PC-3 (cell line): ENCODE measurements at regions of chr4 and their contacts with region 1.

Region 1: GRCh38 chr4:137800861-137801260 is 268.6 kb upstream of the PCDH18 start:
- DNase-seq: no peak
- ATAC-seq: no peak
- H3K4me3 ChIP-seq: no peak overlapping the region
- H3K27ac ChIP-seq: no peak overlapping the region
- H3K4me1 ChIP-seq: peaks cover 22% of the 10 kb centered on the region
- H3K27me3 ChIP-seq: no peaks in the 10 kb centered on the region
- CTCF ChIP-seq: no peak

Region 2: DNA sequence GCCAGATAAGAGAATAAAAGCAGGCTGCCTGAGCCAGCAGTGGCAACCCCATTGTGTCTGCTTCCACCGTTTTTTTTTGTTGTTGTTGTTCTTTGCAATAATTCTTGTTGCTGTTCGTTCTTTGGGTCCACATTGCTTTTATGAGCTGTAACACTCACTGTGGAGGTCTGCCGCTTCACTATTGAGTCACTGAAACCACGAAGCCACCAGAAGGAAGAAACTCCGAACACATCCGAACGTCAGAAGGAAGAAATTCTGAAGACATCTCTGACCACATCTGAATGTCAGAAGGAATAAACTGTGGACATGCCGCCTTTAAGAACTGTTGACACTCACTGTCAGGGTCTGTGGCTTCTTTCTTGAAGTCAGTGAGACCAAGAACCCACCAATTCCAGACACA is 379.1 kb before region 1 on chr4:
- CTCF ChIA-PET with region 1: no interaction called
- POLR2A ChIA-PET with region 1: no interaction called
- intact Hi-C with region 1: no loop called
- DNase-seq: no peak
- ATAC-seq: no peak
- H3K4me3 ChIP-seq: no peak overlapping the region
- H3K27ac ChIP-seq: no peak overlapping the region
- H3K4me1 ChIP-seq: no peaks in the 10 kb centered on the region
- H3K27me3 ChIP-seq: no peaks in the 10 kb centered on the region
- CTCF ChIP-seq: no peak

Region 3: GRCh38 chr4:137445044-137445443 is 355.8 kb before region 1 on chr4:
- CTCF ChIA-PET with region 1: no interaction called
- POLR2A ChIA-PET with region 1: no interaction called
- intact Hi-C with region 1: loop called (anchors 5 kb)
- DNase-seq: no peak
- ATAC-seq: peak; percentile 73
- H3K4me3 ChIP-seq: no peak overlapping the region
- H3K27ac ChIP-seq: no peak overlapping the region
- H3K4me1 ChIP-seq: 0 out of 2 replicates have a peak, but pooled peaks cover 4% of the 10 kb centered on the region
- H3K27me3 ChIP-seq: no peaks in the 10 kb centered on the region
- CTCF ChIP-seq: no peak

Region 4: DNA sequence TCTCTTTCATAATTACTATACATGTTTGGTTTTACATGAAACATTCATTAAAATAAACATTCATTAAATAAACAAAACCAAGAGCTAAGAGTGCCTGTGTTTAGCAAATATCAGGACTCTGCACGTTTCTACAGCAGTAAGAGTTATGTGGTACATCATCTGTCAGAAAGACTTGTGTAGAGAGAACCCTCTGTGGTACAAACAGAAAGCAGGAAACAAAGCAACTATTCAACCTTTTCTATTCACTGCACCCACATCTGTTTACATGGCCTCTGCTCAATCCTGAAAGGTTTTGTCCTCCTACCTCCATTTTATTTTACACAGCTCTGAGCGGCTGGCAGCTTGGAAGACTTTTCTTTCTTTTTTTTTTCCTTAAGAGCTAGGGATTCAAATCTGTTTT is 177.8 kb before region 1 on chr4:
- CTCF ChIA-PET with region 1: no interaction called
- POLR2A ChIA-PET with region 1: no interaction called
- intact Hi-C with region 1: loop called (anchors 10 kb)
- DNase-seq: no peak
- ATAC-seq: no peak
- H3K4me3 ChIP-seq: no peak overlapping the region
- H3K27ac ChIP-seq: no peak overlapping the region
- H3K4me1 ChIP-seq: peaks cover 10% of the 10 kb centered on the region; the same call in 1 of the 2 replicates
- H3K27me3 ChIP-seq: no peaks in the 10 kb centered on the region
- CTCF ChIP-seq: no peak